CD8-positive, alpha-beta T cell (primary cell): ENCODE measurements at regions of chr20 and their contacts with region 1.

Region 1: GRCh38 chr20:47379433-47380150 is 23.1 kb upstream of the ZMYND8 start:
- DNase-seq: no peak
- ATAC-seq: no peak
- H3K4me3 ChIP-seq: no peak overlapping the region
- H3K4me3 Mint-ChIP-seq: no peak overlapping the region
- H3K27ac ChIP-seq: no peak overlapping the region
- H3K27ac Mint-ChIP-seq: no peak overlapping the region
- H3K4me1 ChIP-seq: peaks cover 10% of the 10 kb centered on the region
- H3K4me1 Mint-ChIP-seq: peaks cover 10% of the 10 kb centered on the region
- H3K27me3 ChIP-seq: no peaks in the 10 kb centered on the region
- H3K27me3 Mint-ChIP-seq: no peaks in the 10 kb centered on the region
- CTCF ChIP-seq: no peak

Region 2: GRCh38 chr20:47205577-47206498 is 173.8 kb before region 1 on chr20:
- CTCF ChIA-PET with region 1: interaction called, 115 read pairs
- POLR2A ChIA-PET with region 1: interaction called, 5 read pairs
- intact Hi-C with region 1: loop called in 1 of 2 experiments (anchors 2 kb)
- DNase-seq: peak in 3 of 9 experiments; percentile 49 to 69 (median 55)
- ATAC-seq: peak; percentile 76
- H3K4me3 ChIP-seq: no peak overlapping the region
- H3K4me3 Mint-ChIP-seq: no peak overlapping the region
- H3K27ac ChIP-seq: no peak overlapping the region
- H3K27ac Mint-ChIP-seq: peak overlapping the region; percentile 34
- H3K4me1 ChIP-seq: no peaks in the 10 kb centered on the region
- H3K4me1 Mint-ChIP-seq: peaks cover 4% of the 10 kb centered on the region
- H3K27me3 ChIP-seq: no peaks in the 10 kb centered on the region
- H3K27me3 Mint-ChIP-seq: no peaks in the 10 kb centered on the region
- CTCF ChIP-seq: peak; percentile 63

Region 3: DNA sequence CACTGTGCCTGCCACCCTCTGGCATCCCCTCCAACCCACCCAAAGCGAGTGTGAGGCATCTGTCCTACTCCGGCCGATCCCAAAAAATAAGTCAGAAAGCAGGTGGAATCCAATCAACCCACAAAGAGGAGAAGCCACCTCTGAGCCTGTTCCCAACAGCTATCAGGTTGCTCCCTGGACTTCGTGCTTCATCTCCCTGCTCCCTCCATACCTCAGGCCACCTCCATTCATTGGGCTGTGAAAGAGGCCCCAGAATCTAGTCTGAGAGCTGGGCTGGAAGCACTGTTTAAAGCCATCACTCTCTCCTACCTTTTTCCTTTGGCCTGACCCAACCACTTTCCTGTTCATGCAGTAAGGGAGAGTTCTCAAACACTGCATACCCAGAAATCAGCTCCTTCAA is 129.2 kb before region 1 on chr20:
- CTCF ChIA-PET with region 1: interaction called, 13 read pairs
- POLR2A ChIA-PET with region 1: no interaction called
- intact Hi-C with region 1: no loop called
- DNase-seq: no peak
- ATAC-seq: no peak
- H3K4me3 ChIP-seq: no peak overlapping the region
- H3K4me3 Mint-ChIP-seq: no peak overlapping the region
- H3K27ac ChIP-seq: no peak overlapping the region
- H3K27ac Mint-ChIP-seq: no peak overlapping the region
- H3K4me1 ChIP-seq: no peaks in the 10 kb centered on the region
- H3K4me1 Mint-ChIP-seq: no peaks in the 10 kb centered on the region
- H3K27me3 ChIP-seq: no peaks in the 10 kb centered on the region
- H3K27me3 Mint-ChIP-seq: no peaks in the 10 kb centered on the region
- CTCF ChIP-seq: no peak

Region 4: GRCh38 chr20:47296950-47297349 is 82.6 kb before region 1 on chr20:
- CTCF ChIA-PET with region 1: interaction called, 58 read pairs
- POLR2A ChIA-PET with region 1: no interaction called
- intact Hi-C with region 1: loop called in 1 of 2 experiments (anchors 1 kb)
- DNase-seq: peak in 1 of 9 experiments; percentile 23
- ATAC-seq: no peak
- H3K4me3 ChIP-seq: no peak overlapping the region
- H3K4me3 Mint-ChIP-seq: no peak overlapping the region
- H3K27ac ChIP-seq: no peak overlapping the region
- H3K27ac Mint-ChIP-seq: peak overlapping the region; percentile 60
- H3K4me1 ChIP-seq: no peaks in the 10 kb centered on the region
- H3K4me1 Mint-ChIP-seq: no peaks in the 10 kb centered on the region
- H3K27me3 ChIP-seq: no peaks in the 10 kb centered on the region
- H3K27me3 Mint-ChIP-seq: no peaks in the 10 kb centered on the region
- CTCF ChIP-seq: no peak

Region 5: GRCh38 chr20:47348539-47349142 is 31.0 kb before region 1 on chr20:
- CTCF ChIA-PET with region 1: interaction called, 87 read pairs
- POLR2A ChIA-PET with region 1: interaction called, 8 read pairs
- intact Hi-C with region 1: no loop called
- DNase-seq: no peak
- ATAC-seq: no peak
- H3K4me3 ChIP-seq: no peak overlapping the region
- H3K4me3 Mint-ChIP-seq: no peak overlapping the region
- H3K27ac ChIP-seq: no peak overlapping the region
- H3K27ac Mint-ChIP-seq: no peak overlapping the region
- H3K4me1 ChIP-seq: peaks cover 79% of the 10 kb centered on the region
- H3K4me1 Mint-ChIP-seq: peaks cover 33% of the 10 kb centered on the region
- H3K27me3 ChIP-seq: no peaks in the 10 kb centered on the region
- H3K27me3 Mint-ChIP-seq: no peaks in the 10 kb centered on the region
- CTCF ChIP-seq: no peak

Region 6: GRCh38 chr20:47400685-47401084 is 21.1 kb after region 1 on chr20:
- CTCF ChIA-PET with region 1: interaction called, 20 read pairs
- POLR2A ChIA-PET with region 1: no interaction called
- intact Hi-C with region 1: no loop called
- DNase-seq: no peak
- ATAC-seq: no peak
- H3K4me3 ChIP-seq: no peak overlapping the region
- H3K4me3 Mint-ChIP-seq: no peak overlapping the region
- H3K27ac ChIP-seq: no peak overlapping the region
- H3K27ac Mint-ChIP-seq: no peak overlapping the region
- H3K4me1 ChIP-seq: no peaks in the 10 kb centered on the region
- H3K4me1 Mint-ChIP-seq: peaks cover 5% of the 10 kb centered on the region
- H3K27me3 ChIP-seq: no peaks in the 10 kb centered on the region
- H3K27me3 Mint-ChIP-seq: no peaks in the 10 kb centered on the region
- CTCF ChIP-seq: no peak

Region 7: GRCh38 chr20:47620808-47621805 is 241.5 kb after region 1 on chr20:
- CTCF ChIA-PET with region 1: interaction called, 51 read pairs
- POLR2A ChIA-PET with region 1: interaction called, 4 read pairs
- intact Hi-C with region 1: loop called (anchors 1 kb)
- DNase-seq: peak in 2 of 9 experiments; percentile 61 to 70
- ATAC-seq: no peak
- H3K4me3 ChIP-seq: no peak overlapping the region
- H3K4me3 Mint-ChIP-seq: no peak overlapping the region
- H3K27ac ChIP-seq: no peak overlapping the region
- H3K27ac Mint-ChIP-seq: no peak overlapping the region
- H3K4me1 ChIP-seq: no peaks in the 10 kb centered on the region
- H3K4me1 Mint-ChIP-seq: peaks cover 21% of the 10 kb centered on the region
- H3K27me3 ChIP-seq: no peaks in the 10 kb centered on the region
- H3K27me3 Mint-ChIP-seq: no peaks in the 10 kb centered on the region
- CTCF ChIP-seq: peak; percentile 97